Sigmoid colon (tissue), 7 donors: ENCODE measurements at regions of chr1 and their contacts with region 1.

Region 1: GRCh38 chr1:172429331-172430127 is 9.0 kb downstream of the C1orf105 start:
- DNase-seq: no peak
- H3K4me3 ChIP-seq: no peak overlapping the region
- H3K27ac ChIP-seq: no peak overlapping the region
- H3K4me1 ChIP-seq: no peaks in the 10 kb centered on the region
- H3K27me3 ChIP-seq: no peaks in the 10 kb centered on the region
- CTCF ChIP-seq: peak; percentile 20 to 60 (median 44)
- EP300 ChIP-seq: no peak
- POLR2A ChIP-seq: no peak

Region 2: DNA sequence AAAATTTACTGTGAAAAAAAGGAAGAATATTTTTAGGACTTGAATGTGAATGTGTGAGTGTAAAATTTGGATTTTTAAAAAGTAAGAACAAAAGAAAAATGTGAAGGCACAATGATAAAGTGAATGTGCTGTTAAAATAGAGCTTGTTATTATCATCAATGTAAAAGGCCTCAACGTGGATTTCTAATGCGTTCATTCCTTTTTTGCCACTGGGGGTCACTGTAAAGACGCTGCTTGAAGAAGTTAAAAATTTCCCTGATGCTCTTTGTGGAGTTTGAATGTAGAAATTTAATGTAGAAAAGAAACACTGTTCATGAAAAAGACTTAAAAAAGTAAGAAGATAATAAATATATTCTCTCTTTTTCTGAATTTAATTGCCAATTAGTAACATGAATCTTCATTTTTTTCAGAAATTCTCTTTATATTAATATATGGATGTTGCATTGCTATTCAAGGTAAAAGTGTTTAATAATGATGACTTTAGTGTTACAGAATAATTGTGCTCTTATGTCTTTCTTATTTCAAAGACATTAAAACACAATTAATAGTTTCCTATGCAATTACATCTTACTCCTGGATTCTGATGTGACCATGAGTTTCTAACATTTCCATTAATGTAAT is 426.7 kb before region 1 on chr1:
- intact Hi-C with region 1: loop called (anchors 2 kb)
- DNase-seq: no peak
- H3K4me3 ChIP-seq: no peak overlapping the region
- H3K27ac ChIP-seq: no peak overlapping the region
- H3K4me1 ChIP-seq: no peaks in the 10 kb centered on the region
- H3K27me3 ChIP-seq: no peaks in the 10 kb centered on the region
- CTCF ChIP-seq: peak in 3 of 4 experiments; percentile 42 to 59 (median 46)
- EP300 ChIP-seq: no peak
- POLR2A ChIP-seq: no peak

Region 3: DNA sequence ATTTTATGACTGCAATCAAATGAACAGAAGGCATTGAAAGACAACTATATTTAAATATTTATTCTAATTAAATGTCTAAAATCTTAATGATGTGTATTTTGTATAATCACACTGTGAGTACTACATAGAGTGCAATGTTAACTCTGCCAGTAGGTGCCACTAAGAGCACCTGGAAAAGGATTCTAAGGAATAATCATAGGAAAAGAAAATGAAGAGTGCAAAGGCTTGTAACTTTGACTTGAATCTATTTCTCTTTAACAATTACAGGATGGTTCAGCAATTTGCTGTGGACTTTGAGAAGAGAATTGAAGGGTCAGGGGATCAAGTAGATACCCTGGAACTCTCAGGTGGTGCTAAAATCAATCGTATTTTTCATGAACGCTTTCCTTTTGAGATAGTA is 387.8 kb before region 1 on chr1:
- intact Hi-C with region 1: loop called (anchors 2 kb)
- DNase-seq: no peak
- H3K4me3 ChIP-seq: no peak overlapping the region
- H3K27ac ChIP-seq: no peak overlapping the region
- H3K4me1 ChIP-seq: no peaks in the 10 kb centered on the region
- H3K27me3 ChIP-seq: no peaks in the 10 kb centered on the region
- CTCF ChIP-seq: peak in 3 of 4 experiments; percentile 36 to 46 (median 39)
- EP300 ChIP-seq: no peak
- POLR2A ChIP-seq: no peak